Activated T-helper 2 cell treated with anti-CD3 and anti-CD28 coated beads, Interferon-gamma antibody, Interleukin-2, Interleukin-4, amounts not matched to agents 10 μg/mL and 5 μg/mL and 100 μg/mL, durations not matched to agents 14 hours and 24 hours and 36 hours (primary cell): ENCODE measurements at regions of chr22 and their contacts with region 1.

Region 1: GRCh38 chr22:31290494-31291471 is 1.5 kb downstream of the PIK3IP1 start:
- DNase-seq: peak; percentile 92
- H3K4me3 Mint-ChIP-seq: peak overlapping the region; percentile 97
- H3K27ac Mint-ChIP-seq: peak overlapping the region; percentile 100
- H3K4me1 Mint-ChIP-seq: peaks cover 65% of the 10 kb centered on the region
- H3K27me3 Mint-ChIP-seq: no peaks in the 10 kb centered on the region

Region 2: DNA sequence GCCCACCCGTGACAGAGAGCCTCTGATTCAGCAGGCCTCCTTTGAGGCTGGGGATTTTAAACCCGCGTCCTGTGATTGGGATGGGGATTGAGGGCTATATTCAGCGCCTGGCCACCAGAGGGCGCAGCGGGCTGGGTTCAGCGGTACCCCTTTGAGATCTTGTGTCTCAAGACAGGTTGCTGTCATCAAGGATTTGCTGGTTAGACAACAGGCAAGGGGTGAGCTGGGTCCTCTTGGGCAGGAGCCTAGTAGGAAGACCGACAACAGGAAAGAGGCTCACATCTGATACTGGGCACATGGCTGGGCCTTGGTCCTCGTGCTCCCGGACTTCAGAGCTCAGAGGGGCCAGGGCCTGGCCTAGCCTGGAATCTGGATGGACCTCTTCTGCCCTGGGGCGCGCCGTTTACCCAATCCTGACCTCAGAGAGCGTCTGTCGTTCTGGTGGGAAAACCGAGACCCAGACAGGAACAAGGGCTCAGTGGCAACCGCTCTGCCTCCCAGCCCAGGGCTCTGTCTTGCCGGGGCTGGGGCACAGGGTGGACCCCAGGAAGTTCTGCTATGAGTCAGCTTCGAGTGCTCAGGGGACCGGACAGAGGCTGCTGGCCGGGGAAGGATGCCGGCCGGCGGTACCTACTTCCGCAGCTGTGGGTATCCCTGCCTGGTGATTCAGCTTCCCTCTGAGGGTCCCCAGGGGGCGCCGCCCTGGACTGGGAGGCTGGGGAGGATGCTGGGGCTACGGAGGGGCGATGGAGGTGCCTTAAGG is 656.1 kb before region 1 on chr22:
- intact Hi-C with region 1: loop called (anchors 10 kb)
- DNase-seq: peak; percentile 81
- H3K4me3 Mint-ChIP-seq: peak overlapping the region; percentile 75
- H3K27ac Mint-ChIP-seq: peak overlapping the region; percentile 93
- H3K4me1 Mint-ChIP-seq: peaks cover 23% of the 10 kb centered on the region
- H3K27me3 Mint-ChIP-seq: no peaks in the 10 kb centered on the region

Region 3: DNA sequence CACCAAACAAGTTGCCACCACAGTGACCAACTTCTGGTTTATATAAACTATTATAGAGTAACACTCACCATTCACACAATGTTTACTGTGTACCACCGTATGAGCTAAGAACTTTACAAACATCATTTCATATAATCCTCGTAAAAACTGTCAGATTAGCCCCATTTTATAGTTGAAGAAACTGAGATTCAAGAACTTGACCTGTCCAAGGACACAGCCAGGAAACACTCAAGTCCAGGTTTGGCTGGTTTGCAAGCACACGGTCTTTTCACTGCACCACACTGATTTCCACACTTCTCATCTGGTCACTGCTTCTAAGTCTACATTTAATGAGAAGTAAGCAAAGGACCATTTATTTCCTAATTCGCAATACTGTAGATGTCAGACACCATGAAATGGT is 325.9 kb before region 1 on chr22:
- intact Hi-C with region 1: no loop called
- DNase-seq: no peak
- H3K4me3 Mint-ChIP-seq: no peak overlapping the region
- H3K27ac Mint-ChIP-seq: no peak overlapping the region
- H3K4me1 Mint-ChIP-seq: peaks cover 16% of the 10 kb centered on the region
- H3K27me3 Mint-ChIP-seq: no peaks in the 10 kb centered on the region

Region 4: GRCh38 chr22:31080848-31081649 is 209.7 kb before region 1 on chr22 and contains the start of gene SMTN:
- intact Hi-C with region 1: loop called (anchors 5 kb)
- DNase-seq: peak; percentile 87
- H3K4me3 Mint-ChIP-seq: peak within 1 kb of the TSS; percentile 84
- H3K27ac Mint-ChIP-seq: peak within 1 kb of the TSS; percentile 70
- H3K4me1 Mint-ChIP-seq: peaks cover 31% of the 10 kb centered on the region
- H3K27me3 Mint-ChIP-seq: no peaks in the 10 kb centered on the region
- total RNA-seq, gene SMTN: 27.0 and 28.9 TPM in 2 replicates

Region 5: GRCh38 chr22:31211862-31212730 is 78.7 kb before region 1 on chr22 and contains the start of gene LIMK2:
- intact Hi-C with region 1: loop called (anchors 2 kb)
- DNase-seq: peak; percentile 95
- H3K4me3 Mint-ChIP-seq: peak within 1 kb of the TSS; percentile 85
- H3K27ac Mint-ChIP-seq: peak within 1 kb of the TSS; percentile 70
- H3K4me1 Mint-ChIP-seq: peaks cover 40% of the 10 kb centered on the region
- H3K27me3 Mint-ChIP-seq: no peaks in the 10 kb centered on the region
- total RNA-seq, gene LIMK2: 31.1 and 33.9 TPM in 2 replicates

Region 6: GRCh38 chr22:31345331-31346254 is 54.8 kb after region 1 on chr22:
- intact Hi-C with region 1: loop called (anchors 2 kb)
- DNase-seq: peak; percentile 85
- H3K4me3 Mint-ChIP-seq: peak overlapping the region; percentile 88
- H3K27ac Mint-ChIP-seq: peak overlapping the region; percentile 83
- H3K4me1 Mint-ChIP-seq: peaks cover 37% of the 10 kb centered on the region
- H3K27me3 Mint-ChIP-seq: no peaks in the 10 kb centered on the region

Region 7: GRCh38 chr22:31749636-31750364 is 459.0 kb after region 1 on chr22 and contains the start of gene PRR14L:
- intact Hi-C with region 1: loop called (anchors 5 kb)
- DNase-seq: peak; percentile 98
- H3K4me3 Mint-ChIP-seq: peak within 1 kb of the TSS; percentile 94
- H3K27ac Mint-ChIP-seq: peak within 1 kb of the TSS; percentile 91
- H3K4me1 Mint-ChIP-seq: peaks cover 50% of the 10 kb centered on the region
- H3K27me3 Mint-ChIP-seq: no peaks in the 10 kb centered on the region
- total RNA-seq, gene PRR14L: 54.2 and 58.0 TPM in 2 replicates